A549 (cell line): ENCODE measurements at regions of chr16 and their contacts with region 1.

Region 1: GRCh38 chr16:8936421-8936820 is 27.3 kb downstream of the USP7 start:
- DNase-seq: peak; percentile 56 to 69
- ATAC-seq: peak; percentile 96 to 98
- H3K4me3 ChIP-seq: no peak overlapping the region
- H3K27ac ChIP-seq: no peak overlapping the region
- H3K4me1 ChIP-seq: peaks cover 11% of the 10 kb centered on the region; the same call in 2 of the 3 replicates
- CTCF ChIP-seq: peak; percentile 39
- EP300 ChIP-seq: no peak
- POLR2A ChIP-seq: no peak
- RAD21 ChIP-seq: peak in 1 of 2 experiments; percentile 38; a peak in 3 of 5 replicates

Region 2: GRCh38 chr16:8924214-8924613 is 12.2 kb before region 1 on chr16:
- CTCF ChIA-PET with region 1: interaction called, 11 read pairs
- POLR2A ChIA-PET with region 1: no interaction called
- DNase-seq: no peak
- ATAC-seq: no peak
- H3K4me3 ChIP-seq: no peak overlapping the region
- H3K27ac ChIP-seq: no peak overlapping the region
- H3K4me1 ChIP-seq: no peaks in the 10 kb centered on the region
- CTCF ChIP-seq: no peak
- EP300 ChIP-seq: no peak
- POLR2A ChIP-seq: no peak
- RAD21 ChIP-seq: no peak

Region 3: GRCh38 chr16:8951447-8952280 is 15.2 kb after region 1 on chr16:
- CTCF ChIA-PET with region 1: interaction called, 30 read pairs
- POLR2A ChIA-PET with region 1: no interaction called
- DNase-seq: no peak
- ATAC-seq: peak in 1 of 2 experiments; percentile 25; a peak in 3 of 6 replicates
- H3K4me3 ChIP-seq: no peak overlapping the region
- H3K27ac ChIP-seq: no peak overlapping the region
- H3K4me1 ChIP-seq: peaks cover 27% of the 10 kb centered on the region
- CTCF ChIP-seq: no peak
- EP300 ChIP-seq: no peak
- POLR2A ChIP-seq: no peak
- RAD21 ChIP-seq: no peak